ENCODE measurements at regions of chr4 and their contacts with region 1.

Region 1: DNA sequence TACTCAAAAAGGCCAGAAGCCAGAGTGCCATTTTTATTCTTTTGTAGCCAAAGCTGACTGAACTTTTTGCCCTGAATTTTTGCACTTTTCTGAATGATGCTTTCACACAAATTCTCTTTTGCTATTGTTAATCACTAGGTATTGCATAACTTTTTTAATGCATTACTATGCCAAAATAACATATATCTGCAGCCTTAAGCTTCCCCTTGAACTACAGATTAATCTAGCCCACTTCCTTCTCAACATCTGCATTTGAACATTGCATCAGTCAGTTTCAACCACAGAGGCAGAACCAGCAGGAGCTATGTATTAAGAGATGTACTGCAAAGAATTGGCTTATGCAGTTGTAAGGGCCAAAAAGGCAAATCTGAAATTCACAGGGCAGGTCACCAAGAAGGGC is 197.6 kb upstream of the GYPA start:
- DNase-seq: peak; percentile 17
- H3K4me3 ChIP-seq: no peak overlapping the region
- H3K27ac ChIP-seq: no peak overlapping the region
- H3K4me1 ChIP-seq: no peaks in the 10 kb centered on the region
- CTCF ChIP-seq: no peak

Region 2: DNA sequence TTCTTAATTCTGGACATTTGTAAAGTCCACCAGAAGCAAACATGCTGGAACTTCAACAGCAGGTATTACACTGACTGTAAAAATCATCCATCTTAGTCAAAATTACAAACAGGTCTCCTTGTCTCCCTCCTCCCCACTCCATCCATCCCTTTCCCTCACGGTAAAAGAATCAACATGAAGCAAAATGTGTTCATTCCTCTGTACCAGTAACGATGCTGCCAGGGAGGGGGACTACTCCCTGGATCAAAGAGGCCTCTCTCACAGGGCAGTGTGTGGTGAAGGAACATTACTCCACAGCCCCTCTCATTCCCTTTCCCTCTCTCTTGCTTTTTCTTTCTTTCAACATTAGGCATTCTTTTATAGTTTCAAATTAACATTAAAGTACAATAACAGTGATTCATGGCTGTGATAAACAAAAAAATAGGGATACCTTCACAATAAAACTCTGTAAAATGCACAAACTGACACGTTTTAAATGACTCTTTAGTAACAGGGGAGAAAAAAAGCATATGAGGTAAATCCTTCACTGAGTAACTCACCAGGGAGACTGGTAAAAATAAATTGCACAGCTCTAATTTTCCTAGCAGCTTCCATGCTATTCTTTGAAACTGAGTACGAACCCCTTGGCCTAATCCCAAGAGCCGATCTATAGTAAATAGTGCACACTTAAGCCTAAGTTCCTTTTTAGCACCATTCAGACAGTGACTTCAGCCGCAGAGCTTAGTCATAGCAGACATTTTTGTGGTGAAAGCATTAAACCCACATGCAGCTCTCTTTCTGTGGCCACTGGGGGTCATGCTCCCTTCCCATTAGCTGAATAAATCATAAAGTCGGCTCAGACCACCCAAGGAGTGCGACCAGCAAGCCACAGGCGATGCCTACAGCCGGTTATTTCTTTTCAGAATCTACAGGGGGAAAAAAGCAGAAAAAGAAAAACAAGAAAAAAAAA is 17.9 kb after region 1 on chr4:
- CTCF ChIA-PET with region 1: no interaction called
- POLR2A ChIA-PET with region 1: interaction called, 14 read pairs
- intact Hi-C with region 1: loop called (anchors 1 kb)
- DNase-seq: peak; percentile 7
- H3K4me3 ChIP-seq: no peak overlapping the region
- H3K27ac ChIP-seq: no peak overlapping the region
- H3K4me1 ChIP-seq: peaks cover 8% of the 10 kb centered on the region
- CTCF ChIP-seq: 0 out of 2 replicates have a peak, but pooled peaks have one; percentile 20

Region 3: GRCh38 chr4:144531841-144532240 is 193.7 kb after region 1 on chr4:
- CTCF ChIA-PET with region 1: no interaction called
- POLR2A ChIA-PET with region 1: no interaction called
- intact Hi-C with region 1: no loop called
- DNase-seq: no peak
- H3K4me3 ChIP-seq: no peak overlapping the region
- H3K27ac ChIP-seq: no peak overlapping the region
- H3K4me1 ChIP-seq: no peaks in the 10 kb centered on the region
- CTCF ChIP-seq: no peak

Measured in OCI-LY7 (cell line).